IMR-90 (cell line): ENCODE measurements at regions of chr7 and their contacts with region 1.

Region 1: GRCh38 chr7:81684513-81685269 is 85.2 kb downstream of the HGF start:
- DNase-seq: peak; percentile 100
- ATAC-seq: peak; percentile 92
- H3K4me3 ChIP-seq: no peak overlapping the region
- H3K27ac ChIP-seq: peak overlapping the region; percentile 97; the same call in 1 of the 2 replicates
- H3K4me1 ChIP-seq: peaks cover 5% of the 10 kb centered on the region; the same call in 1 of the 2 replicates
- H3K27me3 ChIP-seq: no peaks in the 10 kb centered on the region
- CTCF ChIP-seq: no peak
- POLR2A ChIP-seq: no peak
- RAD21 ChIP-seq: 0 out of 2 replicates have a peak, but pooled peaks have one; percentile 10

Region 2: DNA sequence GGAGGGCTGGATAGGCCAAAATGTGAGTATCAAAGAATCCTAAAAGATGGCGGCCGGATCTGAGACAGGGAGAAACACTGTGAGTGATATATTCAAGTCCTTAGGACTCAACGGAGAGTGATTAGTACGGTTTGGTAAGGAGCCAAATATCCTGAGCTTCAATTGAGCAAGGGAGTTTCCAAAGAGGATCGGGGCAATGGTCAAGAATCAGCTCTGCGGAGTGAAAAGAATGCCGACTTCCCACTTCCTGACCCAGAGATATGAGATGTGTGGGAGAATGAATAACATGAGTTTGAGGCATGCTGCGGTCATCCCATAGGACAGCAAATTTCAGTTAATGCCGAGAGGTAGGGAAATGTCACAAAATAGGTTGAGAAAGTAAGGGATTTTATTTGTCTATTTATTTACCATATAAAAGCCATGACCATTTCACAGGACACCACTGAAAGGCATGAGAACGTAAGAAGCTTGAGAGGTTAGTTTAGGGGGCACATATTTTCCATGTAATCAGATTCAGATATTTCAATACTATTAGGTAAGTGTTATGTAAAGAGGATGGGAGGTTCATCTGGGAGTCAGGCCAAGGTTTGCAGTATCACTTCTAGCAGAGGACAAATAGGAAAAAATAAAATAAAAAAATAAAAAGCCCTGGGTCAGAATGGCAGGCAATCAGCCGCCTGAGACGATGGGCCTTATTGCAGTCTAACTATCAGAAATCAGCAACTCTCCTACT is 80.5 kb before region 1 on chr7:
- CTCF ChIA-PET with region 1: no interaction called
- POLR2A ChIA-PET with region 1: no interaction called
- dilution Hi-C with region 1: no loop called
- in situ Hi-C with region 1: no loop called
- intact Hi-C with region 1: loop called (anchors 5 kb)
- DNase-seq: peak; percentile 99
- ATAC-seq: peak; percentile 84
- H3K4me3 ChIP-seq: no peak overlapping the region
- H3K27ac ChIP-seq: peak overlapping the region; percentile 3; the same call in 1 of the 2 replicates
- H3K4me1 ChIP-seq: peaks cover 8% of the 10 kb centered on the region
- H3K27me3 ChIP-seq: no peaks in the 10 kb centered on the region
- CTCF ChIP-seq: no peak
- POLR2A ChIP-seq: no peak
- RAD21 ChIP-seq: 0 out of 2 replicates have a peak, but pooled peaks have one; percentile 13